Ovary (tissue), 10 donors: ENCODE measurements at regions of chr13 and their contacts with region 1.

Region 1: GRCh38 chr13:41132512-41133152 is at the start of gene KBTBD6:
- DNase-seq: peak; percentile 91 to 95 (median 93)
- H3K4me3 ChIP-seq: peak within 1 kb of the TSS; percentile 53
- H3K27ac ChIP-seq: peak within 1 kb of the TSS; percentile 26 to 65
- H3K4me1 ChIP-seq: peaks cover 14% of the 10 kb centered on the region
- H3K27me3 ChIP-seq: no peaks in the 10 kb centered on the region
- CTCF ChIP-seq: no peak
- EP300 ChIP-seq: no peak
- POLR2A ChIP-seq: peak; percentile 8
- total RNA-seq, gene KBTBD6: 7.4 to 13.9 (median 9.5) TPM

Region 2: GRCh38 chr13:41193919-41194824 is 61.5 kb after region 1 on chr13 and contains the start of gene KBTBD7:
- intact Hi-C with region 1: loop called in 2 of 4 experiments (anchors 5 kb)
- DNase-seq: peak; percentile 91 to 95 (median 93)
- H3K4me3 ChIP-seq: peak within 1 kb of the TSS; percentile 86
- H3K27ac ChIP-seq: peak within 1 kb of the TSS; percentile 49 to 74
- H3K4me1 ChIP-seq: peaks cover 13% of the 10 kb centered on the region
- H3K27me3 ChIP-seq: no peaks in the 10 kb centered on the region
- CTCF ChIP-seq: peak in 1 of 3 donors; percentile 7
- EP300 ChIP-seq: no peak
- POLR2A ChIP-seq: peak; percentile 41
- total RNA-seq, gene KBTBD7: 5.2 to 11.8 (median 6.6) TPM

Region 3: GRCh38 chr13:41200126-41200525 is 67.5 kb after region 1 on chr13:
- intact Hi-C with region 1: loop called in 1 of 4 experiments (anchors 10 kb)
- DNase-seq: no peak
- H3K4me3 ChIP-seq: no peak overlapping the region
- H3K27ac ChIP-seq: no peak overlapping the region
- H3K4me1 ChIP-seq: no peaks in the 10 kb centered on the region
- H3K27me3 ChIP-seq: no peaks in the 10 kb centered on the region
- CTCF ChIP-seq: no peak
- EP300 ChIP-seq: no peak
- POLR2A ChIP-seq: no peak

Region 4: GRCh38 chr13:41332829-41333228 is 200.2 kb after region 1 on chr13:
- intact Hi-C with region 1: no loop called
- DNase-seq: no peak
- H3K4me3 ChIP-seq: no peak overlapping the region
- H3K27ac ChIP-seq: no peak overlapping the region
- H3K4me1 ChIP-seq: no peaks in the 10 kb centered on the region
- H3K27me3 ChIP-seq: no peaks in the 10 kb centered on the region
- CTCF ChIP-seq: no peak
- EP300 ChIP-seq: no peak
- POLR2A ChIP-seq: no peak